Activated naive CD4-positive, alpha-beta T cell treated with anti-CD3 and anti-CD28 coated beads for 36 hours (primary cell): ENCODE measurements at regions of chr1 and their contacts with region 1.

Region 1: DNA sequence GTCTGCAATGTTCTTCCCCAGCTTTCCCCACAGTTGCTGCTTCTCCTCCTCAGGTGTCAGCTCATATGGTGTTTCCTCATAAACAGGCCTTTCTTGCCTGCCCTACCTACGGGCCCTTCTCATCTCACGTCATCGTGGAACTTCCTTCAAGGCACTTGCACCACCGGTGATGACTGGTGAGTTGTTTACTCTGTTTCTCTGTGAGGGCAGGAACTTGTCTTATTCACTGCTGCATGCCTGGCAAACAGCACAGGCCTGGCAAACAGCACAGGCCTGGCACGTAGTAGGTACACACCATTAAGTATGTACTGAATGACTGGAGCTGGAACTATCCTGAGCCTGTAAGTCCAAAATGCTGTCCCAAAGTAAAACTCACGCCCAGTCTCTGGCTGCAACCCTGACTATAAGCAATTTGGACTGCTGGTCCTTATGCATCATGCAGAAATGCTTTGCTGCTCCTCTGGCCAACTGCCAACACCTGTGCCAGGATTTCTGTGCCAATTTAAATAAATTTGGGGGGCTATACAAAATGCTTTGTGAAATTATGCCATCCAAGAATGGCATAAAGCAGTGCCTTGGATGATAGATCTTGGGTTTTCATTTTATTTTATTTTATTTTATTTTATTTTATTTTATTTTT is 25.7 kb downstream of the STK40 start:
- DNase-seq: peak; percentile 66
- H3K4me3 Mint-ChIP-seq: no peak overlapping the region
- H3K27ac Mint-ChIP-seq: peak overlapping the region; percentile 77
- H3K4me1 Mint-ChIP-seq: peaks cover 25% of the 10 kb centered on the region
- H3K27me3 Mint-ChIP-seq: no peaks in the 10 kb centered on the region

Region 2: GRCh38 chr1:36155408-36156328 is 204.4 kb before region 1 on chr1 and contains the start of gene MAP7D1:
- CTCF ChIA-PET with region 1: no interaction called
- intact Hi-C with region 1: no loop called
- DNase-seq: peak; percentile 88
- H3K4me3 Mint-ChIP-seq: peak within 1 kb of the TSS; percentile 90
- H3K27ac Mint-ChIP-seq: peak within 1 kb of the TSS; percentile 94
- H3K4me1 Mint-ChIP-seq: peaks cover 66% of the 10 kb centered on the region
- H3K27me3 Mint-ChIP-seq: no peaks in the 10 kb centered on the region
- total RNA-seq, gene MAP7D1: 106 TPM

Region 3: GRCh38 chr1:36342481-36343478 is 17.3 kb before region 1 on chr1:
- CTCF ChIA-PET with region 1: interaction called, 15 read pairs
- intact Hi-C with region 1: no loop called
- DNase-seq: peak; percentile 70
- H3K4me3 Mint-ChIP-seq: no peak overlapping the region
- H3K27ac Mint-ChIP-seq: peak overlapping the region; percentile 66
- H3K4me1 Mint-ChIP-seq: peaks cover 18% of the 10 kb centered on the region
- H3K27me3 Mint-ChIP-seq: no peaks in the 10 kb centered on the region